Endothelial cell of umbilical vein (primary cell): ENCODE measurements at regions of chr21 and their contacts with region 1.

Region 1: DNA sequence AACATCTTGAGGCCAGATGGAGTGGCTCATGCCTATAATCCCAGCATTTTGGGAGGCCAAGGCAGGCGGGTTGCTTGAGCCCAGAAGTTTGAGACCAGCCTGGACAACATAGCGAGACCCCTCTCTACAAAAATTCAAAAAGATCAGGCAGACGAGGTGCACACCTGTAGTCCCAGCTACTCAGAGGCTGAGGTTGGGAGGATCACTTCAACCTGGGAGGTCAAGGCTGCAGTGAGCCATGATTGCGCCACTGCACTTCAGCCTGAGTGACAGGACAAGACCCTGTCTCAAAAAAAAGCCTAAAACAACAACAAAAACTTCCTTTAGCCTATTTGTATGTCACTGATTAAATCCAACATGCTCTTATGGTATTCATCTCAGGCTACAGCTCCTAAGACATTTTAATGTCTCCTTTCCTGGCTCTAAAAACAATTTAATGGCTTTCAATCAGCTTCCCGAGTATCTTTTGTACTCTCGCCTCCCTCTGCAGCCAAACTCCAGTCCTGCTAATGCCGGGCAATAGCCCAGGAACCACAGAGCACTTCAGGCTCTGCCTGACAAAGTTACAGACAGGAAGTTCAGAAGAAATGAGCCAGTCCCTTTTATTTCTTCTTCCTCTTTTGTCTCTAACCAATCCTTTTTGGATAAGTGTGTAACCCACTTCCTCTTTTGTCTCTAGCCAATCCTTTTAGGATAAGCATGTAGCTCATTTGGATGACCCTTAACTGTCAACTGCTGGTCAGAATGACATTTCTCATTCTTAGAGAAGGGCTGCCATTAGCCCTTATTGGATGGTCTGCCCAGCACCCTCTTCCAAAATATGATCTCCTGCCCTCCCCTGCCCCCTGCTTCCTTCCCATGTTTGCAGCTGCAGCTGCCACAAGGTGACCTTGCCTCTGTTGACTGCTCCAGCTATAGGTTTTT is 6.6 kb upstream of the DOP1B start:
- DNase-seq: peak; percentile 40
- H3K4me3 ChIP-seq: no peak overlapping the region
- H3K27ac ChIP-seq: no peak overlapping the region
- H3K4me1 ChIP-seq: peaks cover 11% of the 10 kb centered on the region
- H3K27me3 ChIP-seq: peaks cover 0 to under 1% of the 10 kb centered on the region in 2 experiments
- CTCF ChIP-seq: no peak
- POLR2A ChIP-seq: no peak

Region 2: GRCh38 chr21:35940074-35940927 is 209.7 kb before region 1 on chr21:
- CTCF ChIA-PET with region 1: no interaction called
- POLR2A ChIA-PET with region 1: no interaction called
- dilution Hi-C with region 1: no loop called
- intact Hi-C with region 1: no loop called
- DNase-seq: peak; percentile 76
- H3K4me3 ChIP-seq: no peak overlapping the region
- H3K27ac ChIP-seq: no peak overlapping the region
- H3K4me1 ChIP-seq: no peaks in the 10 kb centered on the region
- H3K27me3 ChIP-seq: no peaks in the 10 kb centered on the region
- CTCF ChIP-seq: peak; percentile 57 to 64
- POLR2A ChIP-seq: no peak

Region 3: DNA sequence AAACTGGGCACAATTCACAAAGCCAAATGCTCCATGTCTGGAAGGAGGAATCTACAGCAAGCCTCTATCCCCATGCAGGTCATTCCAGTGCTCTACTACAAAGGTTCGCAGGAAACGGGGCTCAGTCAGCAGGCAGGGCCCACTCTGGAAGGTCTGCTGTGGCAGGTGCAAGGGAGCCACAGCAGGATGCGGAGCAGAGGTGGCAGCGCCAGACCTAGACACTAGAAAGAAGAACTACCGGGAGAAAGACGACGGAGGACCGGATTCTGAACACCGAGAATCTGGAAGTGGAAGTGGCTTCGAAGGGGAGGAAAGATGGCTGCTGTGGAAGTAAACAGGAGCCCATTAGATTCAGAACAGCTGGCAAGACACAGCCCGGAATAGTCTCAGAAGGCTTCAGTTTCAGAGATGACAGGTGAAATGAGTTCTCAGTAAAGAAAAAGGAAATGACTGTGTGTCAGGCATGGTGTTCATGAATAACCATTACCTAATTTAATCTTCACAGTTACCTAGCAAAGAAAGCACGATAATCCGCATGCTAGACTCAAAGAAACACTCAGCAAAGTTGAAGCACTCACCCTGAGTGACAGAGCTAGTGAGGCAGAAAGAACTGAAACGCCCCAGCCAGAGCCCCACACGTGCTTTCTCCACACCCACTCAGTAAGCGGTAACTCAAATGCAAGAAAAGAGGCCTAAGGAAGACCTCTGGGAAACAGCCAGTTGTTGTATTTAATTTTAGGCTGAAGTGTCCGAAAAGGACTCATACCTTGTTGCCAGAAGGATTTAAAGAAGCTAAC is 111.2 kb before region 1 on chr21:
- CTCF ChIA-PET with region 1: no interaction called
- POLR2A ChIA-PET with region 1: no interaction called
- dilution Hi-C with region 1: no loop called
- intact Hi-C with region 1: no loop called
- DNase-seq: no peak
- H3K4me3 ChIP-seq: no peak overlapping the region
- H3K27ac ChIP-seq: no peak overlapping the region
- H3K4me1 ChIP-seq: no peaks in the 10 kb centered on the region
- H3K27me3 ChIP-seq: no peaks in the 10 kb centered on the region
- CTCF ChIP-seq: no peak
- POLR2A ChIP-seq: no peak

Region 4: DNA sequence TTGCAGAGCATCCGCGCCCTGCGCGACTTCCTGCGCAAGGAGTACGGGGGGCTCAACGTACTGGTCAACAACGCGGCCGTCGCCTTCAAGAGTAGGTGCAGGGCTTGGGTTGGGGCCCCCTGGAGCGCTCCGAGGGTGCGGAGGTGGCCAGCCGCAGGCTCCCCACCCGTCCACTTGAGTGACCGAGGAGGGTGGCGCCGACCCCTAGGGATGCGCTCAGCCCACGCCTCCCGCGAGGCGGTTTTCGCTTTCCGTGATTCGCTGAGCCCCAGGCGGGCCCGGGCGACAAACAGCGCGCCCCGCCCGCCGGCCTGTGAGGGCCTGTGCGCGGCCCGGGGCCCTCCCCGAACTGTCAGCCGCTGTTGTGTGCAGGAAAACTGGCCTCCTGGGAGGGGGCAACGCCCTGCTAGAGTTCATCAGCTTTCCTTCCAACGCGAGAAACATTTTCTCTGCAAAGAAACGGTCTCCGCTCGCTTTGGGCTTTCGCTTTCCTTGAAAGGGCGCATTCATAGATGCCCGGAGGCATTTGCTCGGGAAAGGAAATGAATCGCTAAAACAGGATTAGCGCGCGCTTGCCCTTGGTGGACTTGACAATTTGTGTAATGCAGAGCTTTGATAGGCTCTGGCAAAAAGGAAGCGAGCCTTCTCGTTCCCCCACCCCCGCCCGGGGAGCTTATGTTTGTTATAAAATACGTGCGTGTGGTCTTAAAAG is 14.5 kb before region 1 on chr21:
- CTCF ChIA-PET with region 1: interaction called, 11 read pairs
- POLR2A ChIA-PET with region 1: interaction called, 8 read pairs
- dilution Hi-C with region 1: no loop called
- intact Hi-C with region 1: no loop called
- DNase-seq: peak; percentile 76
- H3K4me3 ChIP-seq: peak overlapping the region; percentile 32 to 87 (median 77)
- H3K27ac ChIP-seq: peak overlapping the region; percentile 27
- H3K4me1 ChIP-seq: peaks cover 14% of the 10 kb centered on the region
- H3K27me3 ChIP-seq: no peaks in the 10 kb centered on the region
- CTCF ChIP-seq: no peak
- POLR2A ChIP-seq: no peak